ENCODE measurements at regions of chr16 and their contacts with region 1.

Region 1: GRCh38 chr16:25126820-25127232 is 15.3 kb downstream of the LCMT1 start:
- DNase-seq: peak; percentile 78
- H3K4me3 ChIP-seq: no peak overlapping the region
- H3K27ac ChIP-seq: no peak overlapping the region
- H3K4me1 ChIP-seq: no peaks in the 10 kb centered on the region
- H3K27me3 ChIP-seq: no peaks in the 10 kb centered on the region
- CTCF ChIP-seq: peak; percentile 66

Region 2: DNA sequence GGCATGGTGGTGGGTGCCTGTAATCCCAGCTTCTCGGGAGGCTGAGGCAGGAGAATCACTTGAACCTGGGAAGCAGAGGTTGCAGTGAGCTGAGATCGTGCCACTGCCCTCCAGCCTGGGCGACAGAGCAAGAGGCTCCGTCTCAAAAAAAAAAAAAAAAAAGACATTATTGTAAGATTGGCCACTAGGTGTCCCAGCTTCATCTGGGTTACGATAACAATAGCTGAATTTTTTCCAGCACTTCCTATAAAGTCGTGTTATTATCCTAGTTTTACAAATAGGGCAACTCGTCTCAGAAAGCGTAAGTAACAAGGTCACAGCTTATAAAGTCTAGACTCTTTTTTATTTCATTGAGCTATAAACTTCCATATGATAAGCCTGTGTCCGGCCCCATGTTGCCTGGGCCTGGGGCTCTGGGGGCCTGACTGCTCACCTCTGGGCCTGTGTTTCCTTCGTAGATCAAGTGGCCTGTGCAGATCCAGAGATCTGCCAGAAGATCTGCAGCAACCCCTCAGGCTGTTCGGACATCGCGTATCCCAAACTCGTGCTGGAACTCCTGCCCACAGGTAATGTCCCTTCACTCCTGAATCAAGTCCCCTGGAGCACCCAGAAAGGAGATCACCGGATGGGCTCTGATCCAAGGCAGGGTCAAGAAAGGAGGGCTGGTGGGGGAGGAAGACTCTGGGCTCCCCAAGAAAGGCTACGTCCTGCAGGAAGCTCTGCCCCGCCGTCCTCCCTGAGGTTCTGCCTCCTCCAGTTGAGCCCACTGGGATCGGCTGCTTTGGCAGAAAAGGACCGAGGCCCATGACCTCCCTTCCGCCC is 220.4 kb before region 1 on chr16:
- intact Hi-C with region 1: no loop called
- DNase-seq: no peak
- H3K4me3 ChIP-seq: no peak overlapping the region
- H3K27ac ChIP-seq: no peak overlapping the region
- H3K4me1 ChIP-seq: no peaks in the 10 kb centered on the region
- H3K27me3 ChIP-seq: no peaks in the 10 kb centered on the region
- CTCF ChIP-seq: peak; percentile 37

Region 3: DNA sequence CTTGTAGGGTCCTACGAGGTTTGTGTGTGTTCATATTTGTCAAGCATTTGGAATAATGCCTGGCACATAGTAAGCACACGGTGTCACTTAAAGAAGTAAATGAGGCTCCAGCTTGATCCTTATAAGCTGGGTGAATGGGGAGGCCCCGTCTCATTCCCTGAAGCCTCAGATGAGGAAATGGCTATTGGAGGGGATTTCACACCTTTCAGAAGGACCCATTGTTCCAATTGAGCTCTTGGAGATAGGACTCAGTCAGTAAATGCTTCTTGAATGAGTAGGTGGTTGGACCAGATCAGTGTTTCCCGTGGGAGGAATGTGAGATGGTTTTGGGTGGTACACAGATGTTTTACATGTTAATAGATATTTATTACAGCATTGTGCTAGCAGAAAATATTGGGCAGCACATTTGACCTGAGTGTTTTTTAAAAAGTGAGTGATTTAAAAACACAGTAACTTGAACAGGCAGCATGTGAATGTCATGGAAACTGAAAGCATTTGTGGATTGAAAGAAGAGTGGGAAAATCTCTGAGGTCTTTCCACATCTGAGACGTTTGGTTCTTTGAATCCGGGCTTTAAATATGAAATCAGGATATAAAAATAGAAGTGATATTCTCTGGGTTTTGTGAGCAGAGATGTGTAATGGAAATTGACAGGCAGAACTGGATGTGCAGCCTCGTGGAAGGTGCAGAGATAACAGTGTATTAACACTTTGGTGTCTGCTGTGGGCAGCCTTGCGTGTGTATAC is 75.2 kb before region 1 on chr16:
- intact Hi-C with region 1: loop called (anchors 2 kb)
- DNase-seq: no peak
- H3K4me3 ChIP-seq: no peak overlapping the region
- H3K27ac ChIP-seq: peak overlapping the region; percentile 34
- H3K4me1 ChIP-seq: peaks cover 6% of the 10 kb centered on the region
- H3K27me3 ChIP-seq: no peaks in the 10 kb centered on the region
- CTCF ChIP-seq: no peak

Region 4: GRCh38 chr16:25176081-25176480 is 49.3 kb after region 1 on chr16:
- intact Hi-C with region 1: no loop called
- DNase-seq: no peak
- H3K4me3 ChIP-seq: no peak overlapping the region
- H3K27ac ChIP-seq: no peak overlapping the region
- H3K4me1 ChIP-seq: peaks cover 4% of the 10 kb centered on the region
- H3K27me3 ChIP-seq: no peaks in the 10 kb centered on the region
- CTCF ChIP-seq: no peak

Region 5: DNA sequence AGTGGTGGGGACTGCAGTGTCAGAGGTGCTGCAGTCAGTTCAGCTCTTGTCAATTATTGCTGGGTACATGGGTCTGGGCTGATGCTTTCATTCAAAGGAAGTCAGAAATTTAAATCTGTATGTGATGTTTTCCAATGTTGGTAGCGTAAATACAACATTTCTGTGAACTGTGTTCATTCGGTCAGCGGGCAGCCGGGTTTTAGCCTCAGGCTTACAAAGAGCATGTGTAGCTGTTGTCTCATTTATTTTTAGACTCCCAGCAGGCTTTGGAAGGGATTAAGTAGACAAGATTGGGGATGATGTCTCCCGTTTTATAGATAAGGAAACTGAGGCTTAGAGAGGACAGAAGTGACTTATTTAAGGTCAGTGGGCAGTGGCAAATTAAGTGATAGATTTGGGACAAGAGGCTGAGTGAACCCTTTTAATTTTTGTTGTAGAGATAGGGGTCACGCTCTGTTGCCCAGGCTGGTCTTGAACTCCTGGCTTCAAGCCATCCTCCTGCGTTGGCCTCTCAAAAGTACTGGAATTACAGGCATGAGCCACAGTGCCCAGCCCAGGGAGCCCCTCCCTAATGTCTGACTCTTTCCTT is 98.0 kb after region 1 on chr16:
- intact Hi-C with region 1: loop called (anchors 2 kb)
- DNase-seq: no peak
- H3K4me3 ChIP-seq: no peak overlapping the region
- H3K27ac ChIP-seq: no peak overlapping the region
- H3K4me1 ChIP-seq: no peaks in the 10 kb centered on the region
- H3K27me3 ChIP-seq: no peaks in the 10 kb centered on the region
- CTCF ChIP-seq: no peak